ENCODE measurements at regions of chr10 and their contacts with region 1.

Region 1: DNA sequence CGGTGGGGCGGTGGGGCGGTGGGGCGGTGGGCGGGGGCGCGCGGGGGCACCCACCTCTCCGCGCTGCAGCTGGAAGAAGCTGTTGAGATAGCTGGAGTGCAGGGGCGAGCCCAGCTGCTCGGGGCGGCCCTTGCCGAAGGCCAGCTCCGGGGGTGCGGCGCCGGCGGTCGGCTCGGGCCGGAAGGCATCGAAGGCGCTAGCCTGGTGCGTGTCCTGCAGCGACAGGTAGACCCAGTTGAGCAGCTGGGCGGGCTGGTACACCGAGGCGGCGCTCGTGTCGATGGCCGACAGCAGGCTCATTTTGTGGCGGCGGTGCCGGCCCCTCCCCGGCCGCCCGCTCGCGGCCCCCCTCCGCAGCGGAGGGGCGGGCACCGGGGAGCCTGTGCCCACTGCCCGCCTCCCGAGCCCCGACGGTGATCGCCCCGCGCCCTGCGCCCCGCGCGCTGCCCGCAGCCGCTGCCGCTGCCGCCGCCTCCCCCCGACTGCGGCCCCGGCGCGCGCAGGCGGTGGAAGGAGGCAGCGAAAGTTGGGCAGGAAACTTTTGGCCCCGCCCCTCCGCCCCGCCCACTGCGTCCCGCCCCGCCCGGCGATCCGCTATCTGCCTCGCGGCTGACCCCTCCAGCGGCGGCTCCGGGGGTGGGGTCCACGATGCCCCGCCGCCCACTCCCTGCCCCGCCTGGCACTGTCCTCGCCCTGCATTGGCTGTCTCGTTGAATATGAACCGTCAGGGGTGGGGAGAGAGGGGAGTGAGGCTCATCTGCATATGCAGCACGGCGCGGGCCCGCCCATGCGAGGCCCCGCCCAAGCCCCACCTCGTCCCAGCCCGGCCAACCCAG is at the start of gene ZCCHC24:
- DNase-seq: peak; percentile 99
- ATAC-seq: peak; percentile 95
- total RNA-seq, gene ZCCHC24: 60.1 TPM

Region 2: GRCh38 chr10:78831456-78831855 is 613.9 kb before region 1 on chr10:
- intact Hi-C with region 1: no loop called
- DNase-seq: no peak
- ATAC-seq: peak; percentile 76

Region 3: GRCh38 chr10:78924319-78925003 is 520.9 kb before region 1 on chr10:
- intact Hi-C with region 1: no loop called
- DNase-seq: no peak
- ATAC-seq: peak; percentile 76

Region 4: GRCh38 chr10:79381804-79382221 is 63.5 kb before region 1 on chr10:
- intact Hi-C with region 1: loop called (anchors 5 kb)
- DNase-seq: peak; percentile 70
- ATAC-seq: peak; percentile 49

Region 5: DNA sequence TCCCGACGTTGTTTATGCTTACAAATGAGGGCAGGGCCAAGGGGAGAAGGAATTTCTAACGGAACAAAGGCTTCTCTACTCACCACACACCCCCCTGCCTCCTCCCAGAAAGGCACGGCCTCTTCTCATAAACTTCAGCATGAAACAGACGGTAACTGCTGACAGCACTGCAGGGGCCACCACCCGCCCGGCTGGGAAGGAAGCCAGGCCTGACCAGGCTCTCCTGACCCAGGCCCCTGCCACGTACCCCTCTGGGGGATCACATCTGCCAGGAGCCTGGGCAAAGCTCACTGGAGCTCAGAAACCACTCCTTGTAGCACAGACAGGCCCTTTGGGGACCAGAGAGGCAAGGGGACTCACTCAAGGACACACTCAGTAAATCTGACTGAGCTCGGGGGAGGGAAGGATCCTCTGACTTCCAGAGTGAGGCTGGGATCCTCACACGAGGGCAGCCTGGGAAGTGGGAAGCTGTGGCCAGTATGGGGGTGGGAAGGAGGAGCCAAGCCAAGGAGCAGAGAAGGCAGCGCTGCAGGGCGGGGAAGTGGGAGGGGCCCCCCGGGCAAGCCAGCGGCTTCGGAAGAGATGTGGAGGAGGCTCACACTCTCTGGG is 46.0 kb before region 1 on chr10:
- intact Hi-C with region 1: loop called (anchors 2 kb)
- DNase-seq: peak; percentile 93
- ATAC-seq: peak; percentile 86